GM12878 (cell line): ENCODE measurements at regions of chr13 and their contacts with region 1.

Region 1: DNA sequence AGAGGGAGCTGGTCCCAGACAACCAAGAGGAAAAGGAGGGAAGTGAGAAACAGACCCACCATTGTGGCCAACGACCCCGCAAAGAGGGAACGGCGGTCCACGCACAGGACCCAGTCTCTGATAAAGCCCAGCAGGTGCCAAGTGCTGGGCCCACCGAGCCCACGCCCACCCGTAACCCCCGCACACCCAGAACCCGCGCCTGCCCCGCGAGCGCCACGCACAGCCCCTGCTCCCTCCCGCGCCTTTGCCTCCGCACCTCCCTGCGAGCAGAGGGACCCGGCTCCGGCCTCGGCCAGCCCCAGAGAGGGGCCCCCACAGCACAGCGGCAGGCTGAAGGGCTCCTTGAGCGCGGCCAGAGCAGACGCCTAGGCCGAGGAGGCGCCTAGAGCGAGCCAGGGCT is 1192.2 kb downstream of the PCDH17 start:
- DNase-seq: no peak
- ATAC-seq: no peak
- H3K4me3 ChIP-seq: no peak overlapping the region
- H3K27ac ChIP-seq: no peak overlapping the region
- H3K4me1 ChIP-seq: no peaks in the 10 kb centered on the region
- H3K27me3 ChIP-seq: no peaks in the 10 kb centered on the region
- CTCF ChIP-seq: no peak
- EP300 ChIP-seq: no peak
- POLR2A ChIP-seq: no peak
- RAD21 ChIP-seq: no peak

Region 2: DNA sequence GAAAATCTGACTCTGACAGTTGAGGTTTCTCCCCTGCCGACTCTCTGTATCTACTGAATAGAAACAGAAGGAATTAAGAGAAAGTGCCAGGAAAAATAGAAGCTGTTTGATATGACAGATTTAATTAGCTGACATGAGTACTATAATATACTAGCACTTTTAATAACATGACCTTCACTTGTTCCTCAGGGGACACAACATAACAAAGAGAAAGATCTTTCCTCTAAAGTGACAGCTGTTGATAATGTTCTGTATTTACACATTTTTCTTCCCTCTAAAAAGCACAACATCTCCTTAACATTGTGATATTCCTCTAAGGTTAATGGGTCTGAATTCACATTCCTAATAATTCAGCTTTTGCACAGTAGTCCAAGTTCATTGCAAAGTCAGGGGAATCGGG is 56.1 kb before region 1 on chr13:
- CTCF ChIA-PET with region 1: no interaction called
- POLR2A ChIA-PET with region 1: no interaction called
- RAD21 ChIA-PET with region 1: no interaction called
- SMC1A ChIA-PET with region 1: no interaction called
- in situ Hi-C with region 1: loop called (anchors 10 kb)
- intact Hi-C with region 1: no loop called
- DNase-seq: no peak
- ATAC-seq: no peak
- H3K4me3 ChIP-seq: no peak overlapping the region
- H3K27ac ChIP-seq: no peak overlapping the region
- H3K4me1 ChIP-seq: no peaks in the 10 kb centered on the region
- H3K27me3 ChIP-seq: no peaks in the 10 kb centered on the region
- CTCF ChIP-seq: no peak
- EP300 ChIP-seq: no peak
- POLR2A ChIP-seq: no peak
- RAD21 ChIP-seq: no peak